ENCODE measurements at regions of chr1 and their contacts with region 1.

Region 1: DNA sequence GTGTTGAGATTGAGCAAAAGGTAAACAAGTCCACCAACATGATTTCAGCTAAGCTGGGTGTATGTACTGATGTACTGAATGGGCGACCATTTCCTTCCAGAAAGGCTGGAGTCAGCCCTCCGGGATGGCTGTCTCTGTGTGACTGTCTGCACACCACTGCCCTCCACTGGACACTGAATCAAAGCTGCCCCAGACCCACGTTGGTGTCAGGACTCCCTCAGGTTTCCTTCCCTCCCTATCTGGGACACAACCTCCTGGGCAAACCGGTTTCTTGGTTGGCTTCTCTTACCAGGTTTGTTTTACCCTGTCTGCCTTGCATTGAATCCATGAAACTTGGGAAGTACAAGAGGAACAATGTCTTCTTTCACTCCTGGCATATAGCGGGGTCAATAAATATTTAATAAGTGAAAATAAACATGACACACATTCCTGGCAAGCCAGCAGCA is 5.3 kb upstream of the SRP9 start:
- DNase-seq: peak; percentile 95
- H3K27ac ChIP-seq: peak overlapping the region; percentile 38
- CTCF ChIP-seq: peak; percentile 89

Region 2: DNA sequence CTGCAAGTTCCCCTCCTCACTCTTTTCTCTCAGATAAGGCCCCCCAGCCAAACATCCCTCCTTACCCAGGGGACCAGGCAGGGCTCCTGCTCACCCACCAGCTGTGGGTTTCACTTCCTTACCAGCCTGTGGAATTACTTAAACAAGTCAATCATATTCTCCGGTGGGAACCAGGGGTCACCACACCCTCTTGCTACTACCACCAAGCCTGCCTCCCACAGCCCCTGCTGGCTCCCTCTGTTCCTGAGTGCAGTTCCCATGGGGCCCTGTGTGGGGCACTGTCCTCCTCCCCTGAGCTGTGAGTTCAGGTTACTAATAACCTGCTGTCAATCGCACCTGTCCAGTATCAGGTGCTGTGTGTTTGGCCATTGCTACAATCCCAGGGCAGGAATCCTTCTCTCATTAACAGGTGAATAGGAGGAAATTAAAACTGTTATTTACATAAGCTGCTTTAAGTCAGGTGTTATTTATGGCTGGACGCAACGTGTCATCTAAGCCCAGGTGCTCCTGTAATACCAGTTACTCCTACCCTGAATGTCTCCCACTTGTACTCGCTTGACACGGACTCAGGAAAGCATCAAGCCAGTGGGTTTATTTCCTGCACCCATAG is 291.4 kb before region 1 on chr1:
- CTCF ChIA-PET with region 1: interaction called, 39 read pairs
- POLR2A ChIA-PET with region 1: interaction called, 3 read pairs
- DNase-seq: peak; percentile 81
- H3K27ac ChIP-seq: no peak overlapping the region
- CTCF ChIP-seq: peak; percentile 73

Region 3: DNA sequence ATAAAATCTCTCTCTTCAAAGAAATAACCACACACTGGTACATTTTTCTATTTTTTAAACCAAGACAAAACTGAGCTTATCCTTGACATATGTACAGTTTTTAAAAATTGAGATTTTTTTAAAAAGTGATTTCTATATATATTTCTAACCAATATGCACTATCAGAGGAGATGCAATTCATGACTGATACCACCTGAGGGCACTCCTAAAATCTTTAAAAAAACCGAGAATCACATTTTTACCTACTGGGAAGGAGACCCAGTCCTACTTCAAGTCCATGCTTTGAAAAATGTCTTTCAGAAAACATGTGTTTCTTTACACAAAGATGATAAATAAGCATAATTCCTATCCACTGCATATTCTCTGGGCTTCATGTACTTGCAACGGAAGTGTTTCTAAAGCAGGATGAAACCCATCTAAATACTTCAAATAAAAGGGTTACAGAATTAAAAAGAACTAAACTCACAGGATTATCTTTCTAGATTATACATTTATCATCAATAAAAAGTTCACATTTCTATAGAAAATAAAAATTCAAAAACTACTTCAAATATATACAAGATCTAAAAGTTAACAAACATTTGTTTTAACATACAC is 218.0 kb before region 1 on chr1:
- CTCF ChIA-PET with region 1: interaction called, 13 read pairs
- POLR2A ChIA-PET with region 1: no interaction called
- DNase-seq: peak; percentile 61
- H3K27ac ChIP-seq: no peak overlapping the region
- CTCF ChIP-seq: peak; percentile 76

Region 4: DNA sequence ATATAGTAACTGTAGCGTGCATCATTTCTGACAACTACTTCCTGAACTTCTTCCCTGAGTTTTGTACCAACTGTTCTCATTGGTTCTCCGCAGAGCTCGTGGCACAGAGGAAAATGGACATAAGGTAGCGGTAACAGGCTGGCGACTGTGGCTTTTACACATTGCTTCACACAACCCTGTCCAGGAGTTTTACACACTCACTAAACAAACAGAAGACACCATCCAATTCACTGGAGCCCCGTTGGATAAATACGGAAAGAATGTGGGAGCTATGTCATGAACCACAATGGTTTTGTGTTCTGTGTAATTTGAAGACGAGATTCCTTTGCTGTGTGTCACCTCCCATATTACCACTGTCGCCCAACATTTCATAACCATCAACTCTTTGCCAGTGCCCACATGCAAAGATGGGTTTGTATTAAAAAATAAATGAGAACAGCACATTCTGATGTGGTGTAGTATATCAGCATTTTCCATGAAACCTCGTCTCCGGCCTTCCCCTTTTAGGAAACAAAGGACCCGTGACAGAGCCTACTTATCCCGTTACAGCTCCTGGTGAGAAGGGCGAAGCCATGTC is 72.1 kb before region 1 on chr1:
- CTCF ChIA-PET with region 1: interaction called, 10 read pairs
- POLR2A ChIA-PET with region 1: no interaction called
- DNase-seq: peak; percentile 97
- H3K27ac ChIP-seq: peak overlapping the region; percentile 46
- CTCF ChIP-seq: no peak

Region 5: DNA sequence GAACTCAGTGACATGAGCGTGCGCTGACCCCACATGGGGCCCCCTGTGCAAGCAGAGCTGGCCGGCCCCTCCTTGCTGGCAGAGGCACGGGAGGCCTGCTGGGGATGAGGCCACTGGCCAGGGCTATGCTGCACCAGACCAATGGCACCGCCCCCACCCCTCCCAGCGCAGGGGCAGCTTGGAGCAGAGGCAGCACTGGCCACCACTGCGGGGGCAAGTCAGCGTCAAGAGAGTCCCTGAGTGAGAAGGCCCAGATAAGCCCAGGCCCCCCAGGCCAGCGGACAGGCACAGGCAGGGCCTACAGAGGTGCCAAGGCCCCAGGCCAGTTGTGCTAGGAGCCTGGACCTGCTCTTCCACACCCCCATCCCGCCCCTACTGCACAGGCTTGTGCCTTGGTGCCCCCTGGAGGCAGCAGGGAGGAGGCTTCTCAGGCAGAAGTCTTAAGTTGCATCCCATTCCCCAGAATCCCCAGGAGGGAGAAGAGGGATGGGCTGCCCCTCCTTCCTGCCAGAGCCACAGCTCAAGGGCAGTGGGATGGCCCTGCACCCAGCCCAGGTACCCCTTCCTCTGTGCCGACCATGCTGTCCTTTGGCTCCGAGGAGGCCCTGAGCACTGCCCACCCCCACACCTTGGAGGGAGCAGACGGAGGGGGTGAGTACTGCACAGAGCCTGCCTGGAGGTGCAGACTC is 73.4 kb after region 1 on chr1:
- CTCF ChIA-PET with region 1: interaction called, 14 read pairs
- POLR2A ChIA-PET with region 1: interaction called, 3 read pairs
- DNase-seq: peak; percentile 86
- H3K27ac ChIP-seq: peak overlapping the region; percentile 42
- CTCF ChIP-seq: peak; percentile 72

Measured in RWPE1 (cell line).